Esophagus muscularis mucosa (tissue), 4 donors: ENCODE measurements at regions of chr6 and their contacts with region 1.

Region 1: DNA sequence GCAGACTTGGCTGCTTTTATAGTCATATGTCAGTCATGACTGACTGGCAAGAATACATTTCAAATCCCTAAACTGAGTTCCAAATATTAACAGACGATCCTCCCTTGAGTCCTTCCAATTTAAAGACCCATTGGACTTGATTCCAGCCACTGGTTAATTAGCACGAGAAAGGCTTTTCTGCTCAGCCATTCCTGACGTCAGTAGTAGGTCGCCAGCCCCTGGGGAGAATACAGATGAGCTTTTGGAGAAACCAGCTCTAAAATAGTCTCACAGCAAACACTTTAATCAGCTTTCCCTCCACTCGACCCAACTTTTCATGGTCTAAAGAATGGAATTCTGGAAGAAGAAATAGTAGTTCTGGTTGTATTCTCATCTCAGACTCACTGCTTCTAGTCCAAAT is 91.6 kb downstream of the SLC22A3 start:
- DNase-seq: no peak
- H3K4me3 ChIP-seq: no peak overlapping the region
- H3K27ac ChIP-seq: no peak overlapping the region
- H3K4me1 ChIP-seq: no peaks in the 10 kb centered on the region
- H3K27me3 ChIP-seq: no peaks in the 10 kb centered on the region
- CTCF ChIP-seq: no peak
- EP300 ChIP-seq: no peak
- POLR2A ChIP-seq: no peak

Region 2: DNA sequence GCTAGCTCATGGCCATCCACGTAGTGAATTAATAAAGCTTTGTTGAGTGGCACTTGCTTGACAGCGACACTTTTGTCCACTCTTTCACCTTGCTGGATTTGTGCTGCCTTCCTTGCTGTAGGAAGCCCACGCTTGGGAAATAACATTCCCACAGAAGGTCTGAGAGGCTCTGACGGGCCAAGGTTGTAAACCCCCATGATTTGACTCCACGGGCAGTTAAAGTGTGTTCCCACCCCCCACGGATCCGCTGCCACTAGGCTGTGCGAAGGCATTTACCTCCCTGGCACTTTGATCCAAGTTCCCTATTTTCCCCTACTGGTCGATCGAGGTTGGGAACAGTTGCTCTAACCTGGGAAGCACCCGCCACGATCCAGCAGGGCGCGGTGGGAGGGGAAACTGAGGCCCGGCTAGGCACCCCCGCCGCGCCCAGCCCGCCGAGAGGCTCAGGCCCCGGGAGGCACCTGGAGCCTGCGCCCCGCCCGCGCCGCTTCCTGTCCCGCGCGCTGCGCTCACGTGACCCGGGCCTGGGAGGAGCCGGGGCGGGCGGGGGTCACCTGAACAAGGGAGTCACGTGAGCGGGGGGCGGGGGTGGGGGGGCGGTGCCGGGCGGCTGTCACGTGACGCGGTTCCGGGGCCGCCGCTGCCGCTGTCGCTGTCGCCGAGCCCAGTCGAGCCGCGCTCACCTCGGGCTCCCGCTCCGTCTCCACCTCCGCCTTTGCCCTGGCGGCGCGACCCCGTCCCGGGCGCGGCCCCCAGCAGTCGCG is 471.1 kb before region 1 on chr6 and contains the start of gene IGF2R:
- intact Hi-C with region 1: no loop called
- DNase-seq: peak; percentile 98
- H3K4me3 ChIP-seq: peak within 1 kb of the TSS; percentile 77 to 98 (median 96)
- H3K27ac ChIP-seq: peak within 1 kb of the TSS; percentile 88 to 95 (median 90)
- H3K4me1 ChIP-seq: peaks cover 33 to 46% (median 44%) of the 10 kb centered on the region in 4 donors
- H3K27me3 ChIP-seq: peaks cover 0 to under 1% (median 0%) of the 10 kb centered on the region in 4 donors
- CTCF ChIP-seq: no peak
- EP300 ChIP-seq: no peak
- POLR2A ChIP-seq: peak; percentile 91
- total RNA-seq, gene IGF2R: 43.6 to 75.3 (median 58.4) TPM

Region 3: GRCh38 chr6:160348142-160349019 is 91.4 kb before region 1 on chr6 and contains the start of gene SLC22A3:
- intact Hi-C with region 1: loop called (anchors 5 kb)
- DNase-seq: no peak
- H3K4me3 ChIP-seq: peak within 1 kb of the TSS; percentile 74 to 83 (median 75)
- H3K27ac ChIP-seq: peak within 1 kb of the TSS; percentile 77 to 85 (median 85)
- H3K4me1 ChIP-seq: peaks cover 0 to 50% (median 43%) of the 10 kb centered on the region in 4 donors
- H3K27me3 ChIP-seq: peaks cover 0 to 12% (median 0%) of the 10 kb centered on the region in 4 donors
- CTCF ChIP-seq: peak in 2 of 3 experiments; percentile 18 to 33
- EP300 ChIP-seq: no peak
- POLR2A ChIP-seq: no peak
- total RNA-seq, gene SLC22A3: 16.8 to 20.4 (median 18.9) TPM

Region 4: DNA sequence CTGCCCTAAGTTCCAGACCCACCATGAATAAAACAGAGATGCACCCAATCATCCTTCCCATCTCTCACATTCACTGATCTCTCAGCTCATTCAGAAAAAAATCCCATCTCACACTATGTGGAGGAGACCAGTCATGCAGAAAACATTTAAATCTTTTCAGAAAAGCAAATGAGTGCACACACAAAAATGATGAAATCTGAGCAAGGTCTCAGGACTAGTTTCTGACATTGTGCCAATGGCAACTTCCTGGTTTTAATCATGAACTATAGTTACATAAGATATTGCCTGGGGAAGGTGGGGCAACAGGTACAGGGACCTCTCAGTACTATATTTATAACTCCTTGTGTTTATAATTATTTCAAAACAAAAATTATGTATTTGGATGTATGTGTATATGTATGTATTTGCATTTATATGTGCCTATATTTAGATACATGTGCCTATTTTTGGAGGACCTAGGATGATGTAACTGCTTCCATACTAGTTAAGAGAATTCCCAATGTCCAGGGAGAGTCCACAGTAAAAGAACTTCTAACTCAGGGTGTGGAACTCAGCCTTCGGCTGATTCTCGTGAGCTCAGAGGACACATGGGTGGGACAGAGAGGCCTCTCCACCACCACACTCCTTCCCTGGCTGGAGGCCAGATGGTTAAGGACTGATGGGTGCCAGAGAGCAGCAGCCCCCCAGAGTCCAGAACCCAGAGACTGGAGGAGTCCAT is 480.1 kb after region 1 on chr6:
- intact Hi-C with region 1: no loop called
- DNase-seq: no peak
- H3K4me3 ChIP-seq: no peak overlapping the region
- H3K27ac ChIP-seq: no peak overlapping the region
- H3K4me1 ChIP-seq: no peaks in the 10 kb centered on the region
- H3K27me3 ChIP-seq: no peaks in the 10 kb centered on the region
- CTCF ChIP-seq: no peak
- EP300 ChIP-seq: no peak
- POLR2A ChIP-seq: no peak